Posterior vena cava (tissue), 2 donors: ENCODE measurements at regions of chr17 and their contacts with region 1.

Region 1: GRCh38 chr17:34006126-34006525 is 249.0 kb upstream of the CCL2 start:
- DNase-seq: no peak

Region 2: DNA sequence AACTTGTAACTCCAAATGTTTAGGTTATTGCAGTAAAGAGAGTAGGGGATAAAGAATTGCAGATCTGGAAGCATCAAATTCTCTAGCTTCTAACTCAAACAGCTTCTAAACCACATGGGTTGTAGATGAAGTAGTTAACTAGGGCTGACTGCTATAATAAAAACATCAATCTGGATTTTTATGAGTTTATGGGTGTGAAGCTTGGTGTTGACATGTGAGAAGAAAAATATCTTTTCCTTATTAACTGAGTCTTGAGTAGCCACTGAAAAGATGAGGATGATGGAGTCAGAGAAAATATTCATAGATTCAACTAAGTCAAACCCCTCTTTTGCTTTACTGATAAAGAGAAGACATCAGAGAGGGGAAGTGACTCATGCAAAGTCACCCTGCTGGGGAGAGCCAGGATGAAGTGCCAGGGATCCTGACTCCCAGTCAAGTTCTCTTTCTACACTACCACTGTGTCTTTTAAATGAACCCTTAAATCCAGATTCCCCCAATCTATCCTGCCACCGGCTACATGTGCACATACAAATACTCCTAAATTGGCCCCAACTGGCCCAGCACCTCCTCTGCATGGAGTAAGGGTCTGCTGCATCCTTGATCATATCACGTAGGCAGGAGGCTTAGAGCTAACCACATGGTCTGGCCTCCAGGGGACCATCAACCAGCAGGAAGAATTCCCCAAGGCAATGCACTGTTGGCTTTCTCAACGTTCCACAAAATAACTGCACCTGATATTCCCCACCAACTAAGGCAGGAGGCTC is 15.0 kb before region 1 on chr17:
- intact Hi-C with region 1: loop called in 1 of 2 experiments (anchors 1 kb)
- DNase-seq: no peak